Naive thymus-derived CD4-positive, alpha-beta T cell (primary cell): ENCODE measurements at regions of chr7 and their contacts with region 1.

Region 1: GRCh38 chr7:155815332-155816191 is 3.3 kb upstream of the SHH start:
- DNase-seq: peak; percentile 33 to 81 (median 52)
- ATAC-seq: peak; percentile 77
- H3K4me3 ChIP-seq: no peak overlapping the region
- H3K4me3 Mint-ChIP-seq: peak overlapping the region in 4 of 10 donors; percentile 13 to 41 (median 30)
- H3K27ac ChIP-seq: no peak overlapping the region
- H3K27ac Mint-ChIP-seq: peak overlapping the region in 1 of 9 donors; percentile 19
- H3K4me1 ChIP-seq: no peaks in the 10 kb centered on the region
- H3K4me1 Mint-ChIP-seq: peaks cover 13 to 21% (median 16%) of the 10 kb centered on the region in 7 donors
- H3K27me3 ChIP-seq: peaks cover 0 to 9% of the 10 kb centered on the region in 2 donors
- H3K27me3 Mint-ChIP-seq: peaks cover 38 to 51% (median 40%) of the 10 kb centered on the region in 5 donors

Region 2: GRCh38 chr7:155724327-155725005 is 91.1 kb before region 1 on chr7:
- CTCF ChIA-PET with region 1: no interaction called
- POLR2A ChIA-PET with region 1: no interaction called
- intact Hi-C with region 1: no loop called
- DNase-seq: no peak
- ATAC-seq: peak; percentile 51
- H3K4me3 ChIP-seq: no peak overlapping the region
- H3K4me3 Mint-ChIP-seq: no peak overlapping the region
- H3K27ac ChIP-seq: no peak overlapping the region
- H3K27ac Mint-ChIP-seq: peak overlapping the region in 4 of 9 donors; percentile 0 to 56 (median 22)
- H3K4me1 ChIP-seq: no peaks in the 10 kb centered on the region
- H3K4me1 Mint-ChIP-seq: peaks cover 11 to 58% (median 43%) of the 10 kb centered on the region in 7 donors
- H3K27me3 ChIP-seq: no peaks in the 10 kb centered on the region
- H3K27me3 Mint-ChIP-seq: no peaks in the 10 kb centered on the region

Region 3: DNA sequence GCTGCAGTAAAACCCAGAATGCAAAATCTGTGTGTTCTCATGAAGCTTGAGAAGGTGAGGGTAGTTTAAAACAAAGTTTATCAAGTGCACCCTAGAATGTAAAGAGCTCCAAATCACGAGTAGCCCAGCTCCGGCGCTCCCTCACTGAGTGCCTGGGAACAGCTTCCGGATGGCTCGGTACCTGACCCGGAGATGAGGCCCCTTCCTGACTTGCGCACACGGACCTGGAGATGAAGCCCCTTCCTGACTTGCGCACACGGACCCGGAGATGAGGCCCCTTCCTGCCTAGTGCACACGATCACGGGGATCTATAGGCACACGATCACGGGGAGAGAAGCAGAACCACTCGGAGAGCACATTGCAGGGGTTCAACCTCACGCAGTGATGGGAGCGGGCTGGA is 502.9 kb after region 1 on chr7:
- CTCF ChIA-PET with region 1: no interaction called
- POLR2A ChIA-PET with region 1: no interaction called
- intact Hi-C with region 1: no loop called
- DNase-seq: no peak
- ATAC-seq: no peak
- H3K4me3 ChIP-seq: no peak overlapping the region
- H3K4me3 Mint-ChIP-seq: no peak overlapping the region
- H3K27ac ChIP-seq: no peak overlapping the region
- H3K27ac Mint-ChIP-seq: no peak overlapping the region
- H3K4me1 ChIP-seq: no peaks in the 10 kb centered on the region
- H3K4me1 Mint-ChIP-seq: no peaks in the 10 kb centered on the region
- H3K27me3 ChIP-seq: no peaks in the 10 kb centered on the region
- H3K27me3 Mint-ChIP-seq: peaks cover 1 to 31% (median 12%) of the 10 kb centered on the region in 5 donors

Region 4: DNA sequence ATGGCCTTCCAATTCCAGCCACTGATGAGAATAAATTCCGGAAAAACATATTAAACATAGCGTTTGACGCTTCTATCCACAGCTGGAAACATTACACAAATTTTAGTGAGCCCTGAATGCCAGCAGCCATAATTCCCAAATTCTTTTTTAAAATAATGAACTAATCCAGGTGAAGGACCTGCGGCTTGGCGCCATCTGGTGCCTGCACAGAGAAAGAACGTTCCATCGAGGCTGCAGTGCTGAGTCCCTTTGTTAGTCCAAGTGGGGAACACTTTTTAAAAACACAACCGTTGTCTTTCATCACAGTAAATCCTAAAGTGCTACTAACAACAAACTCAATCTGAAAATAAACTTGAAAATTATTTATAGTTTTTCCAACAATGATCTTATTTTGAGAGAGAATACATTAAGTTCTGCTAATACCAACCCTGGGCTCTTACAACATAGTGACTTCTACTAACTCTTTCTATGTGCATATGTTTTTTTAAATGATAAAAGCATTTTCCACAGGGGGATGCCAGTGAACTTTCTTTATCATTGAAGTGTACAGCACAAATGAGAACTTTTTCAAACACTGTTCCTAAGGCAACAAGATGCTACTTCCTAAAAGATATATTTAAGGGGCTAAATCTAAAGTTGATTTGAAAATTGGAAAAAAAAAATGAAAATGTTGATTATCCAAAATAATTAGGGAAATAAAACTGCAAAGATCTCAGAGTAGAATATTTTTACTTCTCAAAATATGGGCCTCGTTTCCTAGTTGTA is 658.1 kb after region 1 on chr7:
- CTCF ChIA-PET with region 1: interaction called, 5 read pairs
- POLR2A ChIA-PET with region 1: no interaction called
- intact Hi-C with region 1: loop called in 1 of 2 experiments (anchors 1 kb)
- DNase-seq: peak in 2 of 9 donors; percentile 8 to 9
- ATAC-seq: no peak
- H3K4me3 ChIP-seq: no peak overlapping the region
- H3K4me3 Mint-ChIP-seq: no peak overlapping the region
- H3K27ac ChIP-seq: no peak overlapping the region
- H3K27ac Mint-ChIP-seq: no peak overlapping the region
- H3K4me1 ChIP-seq: no peaks in the 10 kb centered on the region
- H3K4me1 Mint-ChIP-seq: no peaks in the 10 kb centered on the region
- H3K27me3 ChIP-seq: no peaks in the 10 kb centered on the region
- H3K27me3 Mint-ChIP-seq: peaks cover 21 to 50% (median 27%) of the 10 kb centered on the region in 5 donors

Region 5: GRCh38 chr7:156827587-156828203 is 1012.1 kb after region 1 on chr7:
- CTCF ChIA-PET with region 1: interaction called, 4 read pairs
- POLR2A ChIA-PET with region 1: no interaction called
- intact Hi-C with region 1: loop called in 1 of 2 experiments (anchors 2 kb)
- DNase-seq: peak in 1 of 9 donors; percentile 14
- ATAC-seq: no peak
- H3K4me3 ChIP-seq: no peak overlapping the region
- H3K4me3 Mint-ChIP-seq: no peak overlapping the region
- H3K27ac ChIP-seq: no peak overlapping the region
- H3K27ac Mint-ChIP-seq: peak overlapping the region in 2 of 9 donors; percentile 75 to 86
- H3K4me1 ChIP-seq: no peaks in the 10 kb centered on the region
- H3K4me1 Mint-ChIP-seq: peaks cover 0 to 6% (median 0%) of the 10 kb centered on the region in 7 donors
- H3K27me3 ChIP-seq: no peaks in the 10 kb centered on the region
- H3K27me3 Mint-ChIP-seq: no peaks in the 10 kb centered on the region